ENCODE measurements at regions of chr3 and their contacts with region 1.

Region 1: DNA sequence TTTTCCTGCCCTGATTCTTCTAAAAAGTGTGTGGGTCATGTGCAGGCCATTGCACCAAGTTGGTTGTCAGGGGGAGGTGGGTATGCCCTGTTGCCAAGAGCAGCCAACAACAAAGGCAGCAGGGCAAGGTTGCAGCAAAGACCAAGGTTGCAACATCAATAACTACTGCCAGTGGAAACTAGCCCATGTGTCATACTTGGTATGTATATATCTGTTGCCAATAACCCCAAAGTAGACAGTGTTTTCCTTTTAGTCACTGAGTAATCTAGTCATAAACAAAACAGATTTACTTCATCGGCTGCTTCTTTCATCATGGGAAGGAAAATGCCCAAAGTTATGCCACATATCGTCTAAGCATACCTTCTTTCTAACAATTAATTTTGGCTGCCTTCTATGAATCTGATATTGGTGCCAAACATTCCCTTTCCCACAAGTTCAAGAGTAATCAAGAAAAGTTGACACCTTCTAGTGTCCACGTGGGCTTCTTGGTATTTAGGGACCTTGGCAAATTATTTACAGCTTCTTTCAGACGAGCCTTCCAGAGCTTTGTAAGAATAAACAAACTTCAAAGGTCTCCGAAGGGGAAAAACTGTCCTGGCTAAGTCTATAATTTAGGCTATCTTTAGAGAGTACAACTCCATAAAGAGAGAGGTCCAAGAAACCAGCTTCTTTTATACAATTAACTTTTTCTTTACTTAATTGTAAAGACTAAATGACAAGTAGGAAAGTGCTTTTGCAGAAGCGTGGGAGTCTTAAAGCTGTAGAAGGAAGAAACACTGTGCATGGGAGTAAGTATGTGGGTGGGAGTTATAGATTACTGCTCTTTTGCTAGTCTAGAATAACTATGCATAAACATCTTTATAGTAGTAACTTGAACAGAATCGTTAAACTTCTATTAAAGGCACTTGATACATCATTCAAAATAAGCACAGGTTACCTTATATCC is 10.0 kb upstream of the MBNL1 start:
- DNase-seq: peak; percentile 83 to 91
- H3K4me3 ChIP-seq: no peak overlapping the region
- H3K27ac ChIP-seq: peak overlapping the region; percentile 81 to 93
- H3K4me1 ChIP-seq: peaks cover 0 to 50% (median 22%) of the 10 kb centered on the region in 4 donors
- H3K27me3 ChIP-seq: no peaks in the 10 kb centered on the region
- CTCF ChIP-seq: no peak

Region 2: DNA sequence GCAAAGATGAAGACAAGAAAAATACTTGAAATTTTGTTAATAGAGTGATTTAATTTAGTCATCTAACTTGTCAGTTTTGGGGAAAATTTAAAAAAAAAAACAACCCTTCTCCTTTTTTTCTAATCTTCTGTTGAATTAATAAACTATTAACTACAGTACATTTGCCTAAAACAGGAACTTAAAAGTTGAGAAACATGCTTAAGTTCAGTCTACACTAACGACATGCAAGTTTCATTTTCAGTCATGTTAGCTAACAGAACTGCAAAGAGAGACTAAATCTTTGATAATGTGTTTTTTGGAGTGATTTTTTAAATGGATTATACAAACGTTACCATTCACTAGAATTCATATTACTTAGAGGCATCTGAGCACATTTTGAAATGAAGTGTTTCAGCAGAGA is 61.9 kb before region 1 on chr3:
- intact Hi-C with region 1: no loop called
- DNase-seq: no peak
- H3K4me3 ChIP-seq: peak overlapping the region; percentile 19 to 22
- H3K27ac ChIP-seq: peak overlapping the region; percentile 74 to 91
- H3K4me1 ChIP-seq: peaks cover 0 to 47% (median 14%) of the 10 kb centered on the region in 4 donors
- H3K27me3 ChIP-seq: no peaks in the 10 kb centered on the region
- CTCF ChIP-seq: no peak

Region 3: DNA sequence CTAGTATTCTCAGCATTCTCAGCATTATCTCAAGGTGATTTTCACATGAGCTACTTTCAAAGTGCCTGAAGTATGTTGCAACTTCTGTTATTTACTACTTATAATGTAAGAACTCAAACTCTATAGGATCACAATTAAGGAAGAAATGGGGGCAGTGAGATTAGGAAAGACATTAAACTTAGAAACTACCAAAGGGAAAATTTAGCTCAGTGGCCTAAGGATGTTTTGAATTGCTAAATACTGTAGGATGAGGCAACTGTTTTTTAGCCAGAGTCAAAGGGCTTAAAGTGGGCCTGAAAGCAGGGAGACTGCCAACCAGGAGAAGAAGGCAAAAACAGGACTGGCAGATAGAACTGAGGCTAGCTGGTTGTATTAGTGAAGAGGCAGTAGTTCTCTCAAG is 45.5 kb before region 1 on chr3:
- intact Hi-C with region 1: loop called (anchors 5 kb)
- DNase-seq: no peak
- H3K4me3 ChIP-seq: no peak overlapping the region
- H3K27ac ChIP-seq: peak overlapping the region; percentile 71 to 91
- H3K4me1 ChIP-seq: peaks cover 0 to 65% (median 17%) of the 10 kb centered on the region in 4 donors
- H3K27me3 ChIP-seq: no peaks in the 10 kb centered on the region
- CTCF ChIP-seq: no peak

Region 4: DNA sequence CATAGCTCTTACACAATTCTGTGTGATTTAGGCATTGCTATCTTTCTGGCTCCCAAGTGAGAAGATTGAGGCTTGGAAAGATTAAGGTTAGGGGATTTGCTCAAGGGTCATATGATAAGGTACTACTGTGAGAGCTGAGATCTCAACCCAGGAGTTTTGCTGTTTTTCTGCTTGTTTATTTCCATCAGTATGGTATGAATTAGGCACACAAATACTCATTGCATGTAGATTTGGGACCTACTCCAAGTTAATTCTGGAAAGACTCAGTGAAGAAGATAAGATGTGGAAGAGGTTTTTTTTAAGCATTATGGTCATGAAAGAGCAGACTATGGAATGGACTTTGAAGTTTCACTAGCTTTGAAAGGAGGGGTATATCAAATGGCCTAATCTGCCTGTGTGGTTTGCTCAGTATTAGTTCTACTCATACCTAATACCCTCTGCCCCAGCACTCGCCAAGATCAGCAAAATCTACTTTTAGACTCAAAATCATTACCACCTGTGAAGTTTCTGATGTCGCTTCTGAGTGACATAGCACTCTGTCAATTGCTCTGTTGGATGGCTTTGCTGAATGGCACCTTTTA is 22.5 kb after region 1 on chr3:
- intact Hi-C with region 1: no loop called
- DNase-seq: no peak
- H3K4me3 ChIP-seq: peak overlapping the region in 1 of 2 donors; percentile 13
- H3K27ac ChIP-seq: peak overlapping the region; percentile 93 to 99
- H3K4me1 ChIP-seq: peaks cover 0 to 98% (median 47%) of the 10 kb centered on the region in 4 donors
- H3K27me3 ChIP-seq: no peaks in the 10 kb centered on the region
- CTCF ChIP-seq: no peak